PC-9 (cell line): ENCODE measurements at regions of chr4 and their contacts with region 1.

Region 1: DNA sequence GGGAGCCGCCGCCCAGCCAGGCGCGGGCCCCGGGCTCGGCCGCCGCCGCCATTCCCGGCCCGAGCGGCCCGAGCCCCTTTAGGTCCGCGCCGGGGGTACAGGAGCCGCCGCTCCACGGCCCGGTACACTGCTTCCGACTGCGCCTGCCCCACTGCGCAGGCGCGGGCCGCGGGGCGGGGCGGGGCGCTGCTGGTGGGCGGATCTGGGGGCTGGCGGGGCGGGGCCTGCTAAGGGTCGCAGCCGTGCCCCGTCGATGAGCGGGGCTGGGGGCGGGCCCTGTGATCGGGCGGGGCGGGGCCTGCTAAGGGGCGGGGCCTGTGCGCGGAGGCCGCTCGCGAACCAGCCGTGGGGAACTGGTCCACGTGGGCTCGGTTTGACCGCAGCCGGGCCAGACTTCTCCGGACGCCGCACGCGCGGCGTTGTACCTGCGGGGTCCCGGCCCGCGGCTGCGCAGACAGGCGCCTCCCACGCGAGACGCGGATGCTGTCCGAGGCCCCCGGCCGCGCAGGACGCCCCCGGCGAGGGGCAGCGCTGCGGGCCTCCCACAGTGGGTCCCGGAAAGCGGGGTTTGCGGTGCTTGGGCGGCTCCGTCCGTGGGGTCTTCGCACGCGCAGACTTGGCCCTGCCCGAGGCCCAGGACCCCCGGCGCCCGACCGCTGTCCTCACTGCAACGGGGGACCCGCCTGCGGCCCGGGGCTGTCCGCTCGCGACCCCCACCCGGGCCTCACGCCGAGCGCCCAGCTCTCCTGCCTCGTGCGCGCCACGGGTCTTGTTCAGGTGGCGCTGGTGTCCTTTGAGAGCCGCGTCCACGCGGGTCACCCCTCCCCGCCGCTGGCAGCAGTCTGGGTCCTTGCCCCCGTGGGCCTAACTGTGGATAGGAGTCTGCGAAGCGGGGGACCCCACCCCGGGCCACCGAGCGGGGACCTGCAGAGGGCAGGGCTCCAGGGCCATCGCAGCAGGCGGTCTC is at the start of gene DGKQ:
- DNase-seq: peak; percentile 42 to 80
- H3K4me3 ChIP-seq: peak within 1 kb of the TSS; percentile 95
- H3K27ac ChIP-seq: no peak within 1 kb of the TSS
- H3K4me1 ChIP-seq: peaks cover 20% of the 10 kb centered on the region
- H3K27me3 ChIP-seq: no peaks in the 10 kb centered on the region
- CTCF ChIP-seq: no peak
- total RNA-seq, gene DGKQ: 11.5 and 16.9 TPM in 2 replicates

Region 2: DNA sequence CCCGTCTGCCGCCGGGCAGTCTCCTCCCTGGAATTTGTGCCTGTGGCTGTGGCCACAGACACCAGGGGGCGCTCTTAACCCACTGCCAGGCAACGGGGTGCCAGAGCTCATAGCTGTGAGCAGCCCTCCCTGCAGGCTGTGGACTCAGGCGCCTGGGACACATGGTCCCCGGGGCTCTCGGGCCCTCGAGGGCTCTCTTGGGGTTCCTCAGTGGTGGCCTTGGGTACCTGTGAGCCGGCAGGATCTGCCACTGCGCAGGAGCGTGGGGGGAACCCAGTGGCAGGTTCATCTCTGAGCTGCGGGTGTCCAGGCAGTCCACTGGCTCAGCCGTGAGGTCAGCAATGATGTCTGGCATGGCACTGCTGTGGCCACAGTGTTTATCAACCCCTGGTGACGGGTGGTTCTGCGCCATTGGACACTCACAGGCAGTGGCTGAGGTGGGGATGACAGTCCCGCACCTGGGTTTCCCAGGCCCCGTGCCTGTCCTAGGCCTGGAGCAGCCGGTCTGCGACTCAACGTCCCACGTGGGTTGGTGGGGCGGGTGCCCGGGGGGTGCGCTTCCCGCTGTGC is 230.9 kb before region 1 on chr4:
- CTCF ChIA-PET with region 1: no interaction called
- POLR2A ChIA-PET with region 1: no interaction called
- intact Hi-C with region 1: no loop called
- DNase-seq: peak in 1 of 2 experiments; percentile 66
- H3K4me3 ChIP-seq: no peak overlapping the region
- H3K27ac ChIP-seq: no peak overlapping the region
- H3K4me1 ChIP-seq: no peaks in the 10 kb centered on the region
- H3K27me3 ChIP-seq: no peaks in the 10 kb centered on the region
- CTCF ChIP-seq: peak; percentile 96

Region 3: DNA sequence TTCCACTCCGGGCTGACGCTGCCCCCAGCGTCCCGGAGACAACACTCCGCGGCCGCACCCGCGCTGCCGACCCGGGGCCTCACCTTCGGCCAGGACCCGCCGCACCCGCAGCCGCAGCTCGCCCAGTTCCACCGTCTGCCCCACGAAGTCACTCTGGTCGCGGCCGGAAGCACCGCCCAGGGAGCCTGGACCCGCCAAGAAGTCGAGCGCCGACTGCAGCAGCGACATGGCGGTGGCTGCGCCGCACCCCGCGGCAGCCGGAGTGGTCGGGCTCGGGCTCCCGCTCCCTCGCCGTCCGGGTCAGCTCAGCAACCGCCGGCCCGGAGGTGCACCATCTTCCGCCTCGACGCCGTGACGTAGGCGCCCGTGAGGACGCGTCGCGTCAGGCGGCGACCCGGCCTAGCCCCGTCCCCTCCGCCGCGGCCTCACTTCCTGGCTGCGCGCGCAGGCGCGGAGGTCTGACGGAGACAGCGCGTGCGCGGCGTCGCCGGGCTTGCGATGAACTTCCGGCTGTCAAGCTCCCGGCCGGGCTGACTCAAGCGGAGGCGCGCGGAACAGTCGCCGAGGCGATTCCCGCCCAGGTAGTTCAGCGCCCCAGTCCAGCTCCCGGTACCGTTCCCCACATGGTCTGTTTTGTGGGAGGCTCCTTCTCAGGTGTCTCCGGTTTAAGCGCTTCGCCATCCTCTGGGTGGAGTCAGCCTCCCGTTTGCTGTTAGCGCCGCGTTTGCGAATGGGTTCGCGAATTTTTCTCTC is 41.6 kb before region 1 on chr4 and contains the starts of genes GAK and TMEM175:
- CTCF ChIA-PET with region 1: no interaction called
- POLR2A ChIA-PET with region 1: no interaction called
- intact Hi-C with region 1: loop called (anchors 5 kb)
- DNase-seq: peak; percentile 86 to 97
- H3K4me3 ChIP-seq: peak within 1 kb of the TSS; percentile 96
- H3K27ac ChIP-seq: peak within 1 kb of the TSS; percentile 24
- H3K4me1 ChIP-seq: peaks cover 30% of the 10 kb centered on the region
- H3K27me3 ChIP-seq: no peaks in the 10 kb centered on the region
- CTCF ChIP-seq: no peak
- total RNA-seq, gene GAK: 114 and 138 TPM in 2 replicates
- total RNA-seq, gene TMEM175: 13.5 and 20.2 TPM in 2 replicates